Aorta (tissue), 5 donors: ENCODE measurements at regions of chr11 and their contacts with region 1.

Region 1: DNA sequence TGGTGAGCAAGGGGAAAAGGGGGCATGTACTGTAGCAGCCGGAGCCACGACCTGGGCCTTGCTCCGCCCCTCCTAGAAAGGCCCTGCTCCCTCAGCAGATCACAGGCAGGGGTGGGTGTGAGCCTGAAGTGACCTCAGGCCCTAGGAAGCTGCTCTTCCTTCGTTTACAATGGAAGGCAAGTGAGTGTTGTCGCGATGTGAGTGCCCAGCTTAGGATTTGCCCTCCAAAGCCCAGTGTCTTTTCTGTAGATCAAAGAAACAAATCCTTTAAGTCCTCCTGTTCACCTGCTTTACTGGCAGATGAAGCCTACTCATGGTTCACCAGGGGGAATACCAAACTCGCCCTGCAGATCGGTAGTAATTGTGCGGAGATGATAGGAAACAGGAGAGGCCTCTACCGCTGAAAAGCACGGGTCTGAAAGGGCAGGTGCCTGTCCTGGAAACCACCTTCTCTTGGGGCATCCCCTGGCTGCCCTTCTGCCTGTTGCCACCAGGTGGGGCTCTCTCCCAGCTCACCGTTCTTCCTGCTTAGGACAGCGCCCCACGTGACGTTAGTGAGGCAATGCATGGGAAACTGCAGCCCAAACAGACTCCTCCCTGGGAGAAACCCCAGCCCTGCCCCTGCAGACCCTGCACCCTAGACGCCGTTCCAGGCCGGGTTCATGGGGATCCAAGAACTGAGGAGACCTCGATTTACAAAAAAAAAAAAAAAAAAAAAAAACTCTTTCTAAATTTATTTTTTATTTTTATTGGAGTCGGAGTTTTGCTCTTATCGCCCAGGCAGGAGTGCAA is 45.9 kb upstream of the RAB1B start:
- DNase-seq: peak; percentile 92 to 94
- ATAC-seq: peak; percentile 96
- H3K4me3 ChIP-seq: no peak overlapping the region
- H3K27ac ChIP-seq: no peak overlapping the region
- H3K4me1 ChIP-seq: no peaks in the 10 kb centered on the region
- H3K27me3 ChIP-seq: no peaks in the 10 kb centered on the region

Region 2: DNA sequence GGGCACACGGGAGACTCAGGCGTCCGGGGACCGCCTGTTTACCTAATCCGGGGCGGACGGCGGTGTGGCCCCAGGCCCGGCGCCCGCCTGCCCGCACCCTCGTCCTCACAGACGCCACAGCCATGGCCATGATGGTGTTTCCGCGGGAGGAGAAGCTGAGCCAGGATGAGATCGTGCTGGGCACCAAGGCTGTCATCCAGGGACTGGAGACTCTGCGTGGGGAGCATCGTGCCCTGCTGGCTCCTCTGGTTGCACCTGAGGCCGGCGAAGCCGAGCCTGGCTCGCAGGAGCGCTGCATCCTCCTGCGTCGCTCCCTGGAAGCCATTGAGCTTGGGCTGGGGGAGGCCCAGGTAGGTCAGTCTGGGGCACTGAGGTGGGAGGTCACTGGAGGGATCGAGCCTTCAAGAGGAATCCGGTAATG is 35.9 kb after region 1 on chr11:
- intact Hi-C with region 1: loop called in 1 of 2 experiments (anchors 2 kb)
- DNase-seq: no peak
- ATAC-seq: no peak
- H3K4me3 ChIP-seq: peak overlapping the region in 1 of 2 donors; percentile 75
- H3K27ac ChIP-seq: no peak overlapping the region
- H3K4me1 ChIP-seq: no peaks in the 10 kb centered on the region
- H3K27me3 ChIP-seq: no peaks in the 10 kb centered on the region

Region 3: GRCh38 chr11:66282468-66283386 is 60.2 kb after region 1 on chr11:
- intact Hi-C with region 1: loop called (anchors 2 kb)
- DNase-seq: peak; percentile 99 to 100
- ATAC-seq: peak; percentile 93
- H3K4me3 ChIP-seq: no peak overlapping the region
- H3K27ac ChIP-seq: no peak overlapping the region
- H3K4me1 ChIP-seq: no peaks in the 10 kb centered on the region
- H3K27me3 ChIP-seq: no peaks in the 10 kb centered on the region